Activated naive CD8-positive, alpha-beta T cell treated with anti-CD3 and anti-CD28 coated beads, Interleukin-2, amount 10 ng/mL, durations not matched to agents 7 days and 5 days (primary cell): ENCODE measurements at regions of chr19 and their contacts with region 1.

Region 1: DNA sequence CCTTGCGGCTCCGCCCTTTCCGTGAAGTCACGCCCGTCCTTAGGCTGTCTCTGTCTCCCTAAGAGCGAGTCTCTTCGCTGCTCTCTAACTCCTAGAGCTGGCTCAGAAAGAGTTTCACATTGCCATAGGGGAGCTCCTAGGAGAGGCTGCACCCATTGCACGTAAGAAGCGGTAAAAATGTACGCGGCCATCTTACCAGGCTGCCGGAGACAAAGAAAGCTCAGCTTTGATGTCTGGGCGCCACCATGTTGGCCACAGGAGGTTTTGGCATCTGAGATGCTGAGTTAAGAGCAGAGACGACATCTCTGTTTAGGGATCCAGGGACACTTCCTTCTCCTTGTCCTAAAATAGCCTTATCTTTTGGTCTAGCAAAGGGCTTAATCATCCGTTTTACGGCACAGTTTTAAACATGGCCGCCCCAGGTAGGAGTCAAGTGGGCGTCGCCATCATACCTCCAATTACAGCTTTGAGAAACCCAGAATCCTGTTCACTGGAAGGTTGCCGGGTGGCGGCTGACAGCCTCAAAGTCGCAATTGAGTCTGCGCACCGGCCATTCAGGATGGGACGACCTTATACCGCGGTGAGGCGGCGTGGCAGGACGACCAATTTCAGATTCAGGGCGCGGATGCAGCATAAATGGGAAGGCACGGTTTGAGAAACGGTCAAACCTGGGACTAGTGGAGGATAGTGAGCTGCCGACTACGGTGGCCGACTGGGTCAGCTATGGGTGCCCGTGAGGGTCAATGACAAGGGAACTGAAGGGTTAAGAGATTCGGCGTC is at the start of gene ZNF793:
- DNase-seq: peak; percentile 85
- ATAC-seq: peak; percentile 91
- H3K4me3 Mint-ChIP-seq: no peak within 1 kb of the TSS
- H3K27ac Mint-ChIP-seq: no peak within 1 kb of the TSS
- H3K4me1 Mint-ChIP-seq: peaks cover 2% of the 10 kb centered on the region
- H3K27me3 Mint-ChIP-seq: no peaks in the 10 kb centered on the region
- total RNA-seq, gene ZNF793: 10.6 to 11.1 TPM

Region 2: GRCh38 chr19:37466798-37467607 is 39.6 kb before region 1 on chr19 and contains the start of gene ZNF569:
- POLR2A ChIA-PET with region 1: interaction called, 44 read pairs
- DNase-seq: peak; percentile 87
- ATAC-seq: peak; percentile 68
- H3K4me3 Mint-ChIP-seq: peak within 1 kb of the TSS; percentile 96
- H3K27ac Mint-ChIP-seq: peak within 1 kb of the TSS; percentile 89
- H3K4me1 Mint-ChIP-seq: peaks cover 20% of the 10 kb centered on the region
- H3K27me3 Mint-ChIP-seq: no peaks in the 10 kb centered on the region
- total RNA-seq, gene ZNF569: 12.8 to 12.9 TPM